Endothelial cell of umbilical vein (primary cell): ENCODE measurements at regions of chr1 and their contacts with region 1.

Region 1: GRCh38 chr1:69871412-69871811 is 303.7 kb downstream of the LRRC7 start:
- DNase-seq: no peak
- H3K4me3 ChIP-seq: no peak overlapping the region
- H3K27ac ChIP-seq: no peak overlapping the region
- H3K4me1 ChIP-seq: no peaks in the 10 kb centered on the region
- H3K27me3 ChIP-seq: no peaks in the 10 kb centered on the region
- CTCF ChIP-seq: no peak
- POLR2A ChIP-seq: no peak

Region 2: DNA sequence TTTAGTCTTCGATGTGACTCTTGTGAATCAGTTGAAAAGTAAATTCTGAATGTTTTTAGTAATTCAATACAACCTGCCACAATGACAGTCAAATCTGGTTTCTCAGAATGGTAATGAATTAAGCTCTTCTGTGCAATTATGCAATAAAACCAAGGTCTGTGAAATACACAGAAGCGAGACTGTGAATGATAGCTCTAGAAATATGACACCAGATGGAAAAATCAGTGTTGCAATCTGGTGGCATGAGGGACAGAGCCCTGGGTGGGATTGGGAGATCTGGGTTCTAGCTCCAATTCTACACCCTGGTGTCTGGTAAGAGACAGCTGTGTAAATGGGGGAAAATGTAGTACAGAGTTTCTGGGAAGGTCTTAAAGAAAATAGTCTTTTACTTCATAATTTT is 1795.8 kb after region 1 on chr1:
- CTCF ChIA-PET with region 1: no interaction called
- POLR2A ChIA-PET with region 1: no interaction called
- dilution Hi-C with region 1: no loop called
- intact Hi-C with region 1: loop called (anchors 5 kb)
- DNase-seq: no peak
- H3K4me3 ChIP-seq: no peak overlapping the region
- H3K27ac ChIP-seq: no peak overlapping the region
- H3K4me1 ChIP-seq: no peaks in the 10 kb centered on the region
- H3K27me3 ChIP-seq: no peaks in the 10 kb centered on the region
- CTCF ChIP-seq: no peak
- POLR2A ChIP-seq: no peak